Endothelial cell of umbilical vein (primary cell): ENCODE measurements at regions of chr19 and their contacts with region 1.

Region 1: DNA sequence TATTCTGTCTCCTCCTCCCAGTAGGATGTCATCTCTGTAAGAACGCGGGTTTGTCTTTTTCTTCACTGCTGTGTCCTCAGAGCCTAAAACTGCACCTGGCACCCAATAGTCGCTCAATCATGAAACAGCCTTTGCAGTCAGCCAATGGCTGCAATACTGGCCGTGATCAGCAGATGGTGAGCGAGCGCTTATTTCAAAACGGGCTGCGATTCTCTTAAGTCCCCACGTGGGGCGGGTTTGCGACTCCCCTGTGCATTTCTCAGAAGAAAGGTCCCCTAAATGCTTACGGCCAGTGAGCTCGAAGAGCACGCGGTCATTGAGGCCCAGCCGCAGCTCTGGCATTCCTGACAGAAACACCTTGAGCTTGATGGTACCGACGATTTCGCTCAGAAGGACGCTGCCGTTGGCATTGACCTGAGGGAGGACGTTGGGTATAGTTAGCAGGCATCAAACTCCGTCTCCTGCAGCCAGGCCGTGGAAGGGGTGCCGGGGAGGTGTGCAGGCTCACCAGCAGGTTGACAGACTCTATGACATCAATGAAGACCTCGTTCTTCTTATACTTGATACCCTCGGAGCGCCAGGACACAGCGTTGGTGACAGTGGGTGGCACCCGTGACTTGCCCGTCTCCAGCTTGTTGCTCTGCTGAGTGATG is 6.0 kb downstream of the AP1M2 start:
- DNase-seq: peak; percentile 88
- H3K4me3 ChIP-seq: no peak overlapping the region
- H3K27ac ChIP-seq: no peak overlapping the region
- H3K4me1 ChIP-seq: no peaks in the 10 kb centered on the region
- H3K27me3 ChIP-seq: no peaks in the 10 kb centered on the region
- CTCF ChIP-seq: peak; percentile 98
- POLR2A ChIP-seq: no peak

Region 2: GRCh38 chr19:10238172-10238783 is 342.8 kb before region 1 on chr19:
- CTCF ChIA-PET with region 1: no interaction called
- POLR2A ChIA-PET with region 1: no interaction called
- dilution Hi-C with region 1: no loop called
- intact Hi-C with region 1: no loop called
- DNase-seq: no peak
- H3K4me3 ChIP-seq: no peak overlapping the region
- H3K27ac ChIP-seq: no peak overlapping the region
- H3K4me1 ChIP-seq: peaks cover 9% of the 10 kb centered on the region
- H3K27me3 ChIP-seq: no peaks in the 10 kb centered on the region
- CTCF ChIP-seq: no peak
- POLR2A ChIP-seq: no peak

Region 3: GRCh38 chr19:10593820-10594637 is 12.9 kb after region 1 on chr19:
- CTCF ChIA-PET with region 1: interaction called, 35 read pairs
- POLR2A ChIA-PET with region 1: no interaction called
- dilution Hi-C with region 1: no loop called
- intact Hi-C with region 1: no loop called
- DNase-seq: no peak
- H3K4me3 ChIP-seq: no peak overlapping the region
- H3K27ac ChIP-seq: no peak overlapping the region
- H3K4me1 ChIP-seq: peaks cover 13% of the 10 kb centered on the region
- H3K27me3 ChIP-seq: no peaks in the 10 kb centered on the region
- CTCF ChIP-seq: no peak
- POLR2A ChIP-seq: no peak

Region 4: DNA sequence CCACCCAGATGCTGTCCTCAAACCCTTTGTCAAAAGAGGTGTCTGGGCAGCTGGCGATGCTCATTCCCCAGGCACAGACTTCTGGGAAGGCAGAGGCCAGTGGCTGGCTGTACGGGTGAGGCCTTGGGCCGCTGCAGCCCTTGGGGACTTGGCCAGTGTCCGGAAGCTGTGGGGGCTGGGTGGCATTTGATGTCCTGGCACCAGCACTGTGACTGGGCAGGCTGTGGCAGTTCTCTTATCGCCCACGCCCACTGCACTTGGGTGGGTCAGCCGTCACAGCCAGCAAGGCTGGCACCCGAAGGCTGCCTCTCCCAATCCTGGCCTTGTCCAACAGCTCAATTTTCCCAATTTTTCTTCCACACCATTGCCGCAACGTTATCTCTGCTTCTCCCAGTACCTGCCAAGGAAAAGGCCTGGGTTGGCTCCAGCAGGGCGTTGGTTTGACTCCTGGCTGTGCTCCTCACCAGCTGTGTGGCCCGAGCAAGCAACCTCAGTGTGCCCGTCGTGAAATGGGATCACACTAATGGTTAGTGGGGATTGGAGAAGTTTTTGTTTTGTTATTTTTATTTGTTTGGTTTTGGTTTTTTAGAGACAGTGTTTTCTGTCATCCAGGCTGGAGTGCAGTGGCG is 31.5 kb after region 1 on chr19:
- CTCF ChIA-PET with region 1: interaction called, 17 read pairs
- POLR2A ChIA-PET with region 1: no interaction called
- dilution Hi-C with region 1: no loop called
- intact Hi-C with region 1: no loop called
- DNase-seq: no peak
- H3K4me3 ChIP-seq: no peak overlapping the region
- H3K27ac ChIP-seq: no peak overlapping the region
- H3K4me1 ChIP-seq: no peaks in the 10 kb centered on the region
- H3K27me3 ChIP-seq: no peaks in the 10 kb centered on the region
- CTCF ChIP-seq: no peak
- POLR2A ChIP-seq: no peak

Region 5: DNA sequence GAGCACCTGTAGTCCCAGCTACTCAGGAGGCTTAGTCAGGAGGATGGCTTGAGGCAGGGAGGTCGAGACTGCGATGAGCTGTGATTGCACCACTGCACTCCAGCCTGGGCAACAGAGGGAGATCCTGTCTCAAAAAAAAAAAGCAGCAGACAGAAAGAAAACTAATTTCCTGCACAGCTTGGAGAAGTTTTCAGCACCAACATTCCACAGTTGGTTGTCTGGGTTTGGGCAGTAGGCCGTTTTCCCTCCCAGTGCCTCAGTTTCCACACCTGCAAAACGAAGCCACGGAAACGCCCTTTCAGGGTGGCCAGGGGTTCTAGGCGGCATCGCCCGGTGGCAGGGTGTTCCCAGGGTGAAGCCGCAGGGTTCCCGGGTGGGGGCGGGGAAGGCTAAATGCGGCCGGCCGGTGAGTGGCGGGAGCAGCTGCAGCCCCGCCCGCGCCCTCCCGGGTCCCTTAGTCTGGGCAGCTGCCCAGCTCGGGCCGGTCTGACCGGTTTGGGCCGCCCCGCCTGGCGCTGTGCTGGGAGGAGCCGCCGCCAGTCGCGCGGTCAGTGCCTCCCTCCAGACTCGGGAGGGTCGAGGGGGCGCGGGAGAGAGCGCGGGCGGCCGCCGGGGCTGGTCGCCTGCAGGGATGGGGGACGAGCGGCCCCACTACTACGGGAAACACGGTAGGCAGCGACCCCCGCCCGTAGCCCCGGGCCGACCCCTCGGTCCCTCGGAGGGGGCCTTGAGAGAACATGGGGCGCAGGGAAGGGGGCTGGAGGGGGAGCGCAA is 44.1 kb after region 1 on chr19 and contains the start of gene SLC44A2:
- CTCF ChIA-PET with region 1: interaction called, 22 read pairs
- POLR2A ChIA-PET with region 1: no interaction called
- dilution Hi-C with region 1: no loop called
- intact Hi-C with region 1: loop called (anchors 5 kb)
- DNase-seq: peak; percentile 41
- H3K4me3 ChIP-seq: peak within 1 kb of the TSS; percentile 33 to 37 (median 33)
- H3K27ac ChIP-seq: no peak within 1 kb of the TSS
- H3K4me1 ChIP-seq: peaks cover 10% of the 10 kb centered on the region
- H3K27me3 ChIP-seq: no peaks in the 10 kb centered on the region
- CTCF ChIP-seq: no peak
- POLR2A ChIP-seq: peak; percentile 22
- total RNA-seq, gene SLC44A2: 130 and 136 TPM in 2 replicates